CD4-positive, alpha-beta T cell (primary cell): ENCODE measurements at regions of chr19 and their contacts with region 1.

Region 1: DNA sequence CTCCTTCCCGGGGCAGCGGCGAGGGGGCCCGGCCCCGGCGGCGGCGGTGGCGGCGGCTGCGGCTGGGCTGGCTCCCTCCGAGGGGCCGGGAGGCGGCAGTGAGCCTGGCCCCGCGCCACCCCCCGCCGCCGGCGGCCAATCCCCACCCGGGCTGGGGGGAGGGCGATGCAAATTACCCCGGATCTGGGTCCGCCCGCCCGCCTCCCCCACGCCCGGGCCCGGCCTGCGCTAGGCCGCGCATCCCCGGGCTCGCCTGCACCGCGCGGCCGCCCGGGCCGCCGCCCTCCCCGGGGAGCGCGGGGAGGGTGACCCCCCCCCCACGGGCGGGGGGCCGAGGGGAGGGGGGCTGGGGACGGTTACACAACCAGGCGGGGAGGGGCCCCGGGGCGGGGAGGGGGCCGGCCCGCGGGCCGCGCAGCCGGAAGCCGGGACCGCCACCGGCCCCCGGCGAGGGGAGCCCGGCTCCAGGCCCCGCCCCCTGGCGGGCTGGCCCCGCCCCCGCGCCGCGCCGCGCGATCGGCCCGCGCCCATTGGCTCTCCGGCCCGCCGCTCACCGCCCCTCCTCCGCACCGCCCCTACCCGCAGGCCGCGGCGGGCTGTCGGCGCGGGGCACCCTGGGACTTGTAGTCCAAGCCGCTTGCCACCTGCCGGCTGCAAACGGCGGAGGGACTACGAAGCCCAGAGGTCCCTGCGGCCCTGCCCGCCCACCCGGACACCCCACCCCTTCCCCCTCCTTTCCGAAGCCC is 1.1 kb downstream of the ZBTB7A start:
- DNase-seq: peak; percentile 94 to 99 (median 97)
- ATAC-seq: peak; percentile 74
- H3K4me3 ChIP-seq: peak overlapping the region; percentile 89
- H3K4me3 Mint-ChIP-seq: peak overlapping the region; percentile 88
- H3K27ac ChIP-seq: peak overlapping the region in 1 of 2 donors; percentile 83
- H3K27ac Mint-ChIP-seq: peak overlapping the region; percentile 98
- H3K4me1 ChIP-seq: peaks cover 68% of the 10 kb centered on the region
- H3K4me1 Mint-ChIP-seq: peaks cover 33% of the 10 kb centered on the region
- H3K27me3 ChIP-seq: no peaks in the 10 kb centered on the region
- H3K27me3 Mint-ChIP-seq: no peaks in the 10 kb centered on the region
- CTCF ChIP-seq: no peak

Region 2: GRCh38 chr19:3907626-3908265 is 157.9 kb before region 1 on chr19:
- CTCF ChIA-PET with region 1: no interaction called
- POLR2A ChIA-PET with region 1: no interaction called
- intact Hi-C with region 1: no loop called
- DNase-seq: no peak
- ATAC-seq: no peak
- H3K4me3 ChIP-seq: no peak overlapping the region
- H3K4me3 Mint-ChIP-seq: no peak overlapping the region
- H3K27ac ChIP-seq: no peak overlapping the region
- H3K27ac Mint-ChIP-seq: no peak overlapping the region
- H3K4me1 ChIP-seq: no peaks in the 10 kb centered on the region
- H3K4me1 Mint-ChIP-seq: no peaks in the 10 kb centered on the region
- H3K27me3 ChIP-seq: no peaks in the 10 kb centered on the region
- H3K27me3 Mint-ChIP-seq: no peaks in the 10 kb centered on the region
- CTCF ChIP-seq: no peak

Region 3: DNA sequence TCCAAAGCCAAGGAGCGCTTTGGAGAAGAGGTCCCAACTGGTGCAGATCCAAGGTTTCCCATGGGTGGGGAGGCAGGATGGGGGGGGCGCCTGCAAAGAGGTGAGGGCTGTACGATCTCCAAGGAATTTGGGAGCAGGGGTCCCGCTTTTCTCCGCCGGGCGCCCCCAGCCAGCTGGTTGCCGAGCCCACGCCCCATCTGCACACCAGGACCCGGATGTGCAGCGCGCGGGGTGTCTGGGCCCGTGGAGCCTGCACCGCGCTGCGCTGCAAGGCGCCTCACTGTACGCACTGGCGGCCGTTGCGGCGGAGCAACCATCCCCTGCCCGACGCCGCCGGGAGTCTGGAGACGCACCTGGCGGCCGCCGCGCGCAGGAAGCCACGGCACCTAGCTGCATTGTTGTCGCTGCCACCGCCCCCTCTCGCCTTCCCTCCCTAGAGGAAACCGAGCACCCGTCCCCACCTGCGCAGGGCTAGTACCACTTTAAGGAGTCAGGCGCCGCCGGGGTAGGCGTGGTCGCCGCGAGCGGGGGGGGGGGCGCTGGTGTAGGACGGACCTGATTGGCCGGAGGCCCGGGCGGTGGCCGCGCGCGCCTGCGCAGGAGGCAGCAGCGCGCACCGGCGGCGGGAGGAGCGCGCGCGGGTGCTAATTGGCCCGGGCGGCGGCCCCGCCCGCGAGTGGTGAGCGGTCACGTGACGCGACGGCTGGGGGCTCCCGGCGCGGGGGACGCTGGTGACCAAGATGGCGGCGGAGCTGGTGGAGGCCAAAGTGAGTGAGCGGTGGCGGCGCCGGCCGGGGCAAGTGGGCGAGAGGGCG is 58.4 kb before region 1 on chr19 and contains the start of gene PIAS4:
- CTCF ChIA-PET with region 1: no interaction called
- POLR2A ChIA-PET with region 1: interaction called, 10 read pairs
- intact Hi-C with region 1: loop called (anchors 1 to 5 kb)
- DNase-seq: peak; percentile 93 to 99 (median 96)
- ATAC-seq: peak; percentile 87
- H3K4me3 ChIP-seq: peak within 1 kb of the TSS; percentile 85
- H3K4me3 Mint-ChIP-seq: peak within 1 kb of the TSS; percentile 89
- H3K27ac ChIP-seq: peak within 1 kb of the TSS in 1 of 2 donors; percentile 60
- H3K27ac Mint-ChIP-seq: peak within 1 kb of the TSS; percentile 80
- H3K4me1 ChIP-seq: peaks cover 48% of the 10 kb centered on the region
- H3K4me1 Mint-ChIP-seq: peaks cover 15% of the 10 kb centered on the region
- H3K27me3 ChIP-seq: no peaks in the 10 kb centered on the region
- H3K27me3 Mint-ChIP-seq: no peaks in the 10 kb centered on the region
- CTCF ChIP-seq: peak; percentile 24
- total RNA-seq, gene PIAS4: 14.5 to 16.5 TPM

Region 4: DNA sequence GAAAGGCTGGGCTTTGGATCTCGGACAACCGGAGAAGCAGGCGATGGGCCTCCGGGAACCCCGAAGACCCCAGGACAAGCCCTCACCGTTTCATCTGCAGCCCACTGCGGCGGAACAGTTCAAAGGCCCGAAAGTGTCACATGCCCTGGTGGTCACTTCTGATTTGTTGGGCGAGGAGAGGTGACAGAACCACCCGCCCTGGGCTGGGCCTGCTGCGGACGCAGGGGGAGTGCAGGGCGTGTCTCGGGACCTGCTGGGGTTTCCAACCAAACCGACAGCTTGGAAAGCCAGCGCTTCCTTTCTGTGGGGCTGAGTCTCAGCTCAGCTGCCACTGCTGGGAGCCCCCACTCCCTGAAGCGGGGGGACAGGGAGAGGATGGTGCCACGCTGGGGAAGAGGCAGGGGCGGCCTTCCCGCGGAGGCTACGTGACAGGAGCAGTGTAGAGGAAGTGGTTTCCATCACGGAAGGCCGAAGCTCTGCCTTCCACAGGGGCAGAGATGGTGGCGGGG is 23.9 kb after region 1 on chr19:
- CTCF ChIA-PET with region 1: no interaction called
- POLR2A ChIA-PET with region 1: interaction called, 17 read pairs
- intact Hi-C with region 1: no loop called
- DNase-seq: peak in 9 of 14 experiments; percentile 25 to 81 (median 48)
- ATAC-seq: peak; percentile 47
- H3K4me3 ChIP-seq: peak overlapping the region; percentile 34
- H3K4me3 Mint-ChIP-seq: peak overlapping the region; percentile 80
- H3K27ac ChIP-seq: peak overlapping the region; percentile 52 to 77
- H3K27ac Mint-ChIP-seq: peak overlapping the region; percentile 95
- H3K4me1 ChIP-seq: peaks cover 57% of the 10 kb centered on the region
- H3K4me1 Mint-ChIP-seq: peaks cover 40% of the 10 kb centered on the region
- H3K27me3 ChIP-seq: no peaks in the 10 kb centered on the region
- H3K27me3 Mint-ChIP-seq: no peaks in the 10 kb centered on the region
- CTCF ChIP-seq: no peak

Region 5: DNA sequence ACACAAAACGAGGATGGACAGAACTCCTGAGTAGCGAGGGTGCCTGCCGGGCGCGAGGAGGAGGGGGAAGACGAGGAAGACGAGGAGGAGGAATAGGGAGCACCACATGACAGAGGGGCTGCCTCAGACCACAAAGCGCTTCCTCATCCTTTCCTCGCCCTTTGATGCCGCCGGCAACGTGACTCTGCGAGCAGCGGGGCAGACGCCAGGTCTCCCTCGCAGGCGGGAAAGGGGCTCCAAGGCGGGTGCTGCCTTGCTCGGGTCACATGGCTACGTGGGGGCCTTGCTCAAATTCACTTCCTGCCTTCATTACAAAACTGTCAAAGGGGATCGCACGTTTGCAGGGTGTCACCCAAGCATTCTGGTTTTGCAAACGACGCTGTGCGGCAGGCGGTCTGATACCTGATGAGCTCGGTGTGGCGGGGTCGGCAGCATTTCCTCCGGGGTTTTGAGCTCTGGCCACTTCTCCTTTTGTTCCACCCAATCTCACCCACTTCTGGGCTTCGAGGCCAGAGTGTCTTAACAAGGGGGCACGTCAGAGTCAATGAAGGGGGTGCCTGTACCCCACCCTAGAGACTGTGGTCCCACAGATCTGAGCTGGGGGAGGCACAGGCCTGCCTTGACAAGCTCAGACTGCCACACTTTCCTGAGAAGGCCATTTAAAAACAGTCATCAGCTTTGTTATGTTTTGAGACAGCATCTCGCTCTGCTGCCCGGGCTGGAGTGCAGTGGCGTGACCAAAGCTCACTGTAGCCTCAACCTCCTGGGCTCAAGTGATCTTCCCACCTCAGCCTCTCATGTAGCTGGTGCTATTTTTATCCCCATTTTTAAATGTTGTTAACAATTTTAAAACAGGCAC is 43.4 kb after region 1 on chr19:
- CTCF ChIA-PET with region 1: no interaction called
- POLR2A ChIA-PET with region 1: interaction called, 70 read pairs
- intact Hi-C with region 1: loop called (anchors 1 to 2 kb)
- DNase-seq: peak; percentile 39 to 92 (median 76)
- ATAC-seq: peak; percentile 59
- H3K4me3 ChIP-seq: peak overlapping the region; percentile 16
- H3K4me3 Mint-ChIP-seq: peak overlapping the region; percentile 68
- H3K27ac ChIP-seq: peak overlapping the region; percentile 53 to 75
- H3K27ac Mint-ChIP-seq: peak overlapping the region; percentile 96
- H3K4me1 ChIP-seq: peaks cover 75% of the 10 kb centered on the region
- H3K4me1 Mint-ChIP-seq: peaks cover 46% of the 10 kb centered on the region
- H3K27me3 ChIP-seq: no peaks in the 10 kb centered on the region
- H3K27me3 Mint-ChIP-seq: no peaks in the 10 kb centered on the region
- CTCF ChIP-seq: no peak

Region 6: GRCh38 chr19:4123615-4124568 is 58.3 kb after region 1 on chr19 and contains the start of gene MAP2K2:
- CTCF ChIA-PET with region 1: no interaction called
- POLR2A ChIA-PET with region 1: interaction called, 3 read pairs
- intact Hi-C with region 1: loop called in 1 of 2 experiments (anchors 2 kb)
- DNase-seq: peak; percentile 92 to 99 (median 96)
- ATAC-seq: peak; percentile 97
- H3K4me3 ChIP-seq: peak within 1 kb of the TSS; percentile 59
- H3K4me3 Mint-ChIP-seq: peak within 1 kb of the TSS; percentile 93
- H3K27ac ChIP-seq: peak within 1 kb of the TSS; percentile 44 to 53
- H3K27ac Mint-ChIP-seq: peak within 1 kb of the TSS; percentile 89
- H3K4me1 ChIP-seq: peaks cover 32% of the 10 kb centered on the region
- H3K4me1 Mint-ChIP-seq: peaks cover 26% of the 10 kb centered on the region
- H3K27me3 ChIP-seq: no peaks in the 10 kb centered on the region
- H3K27me3 Mint-ChIP-seq: no peaks in the 10 kb centered on the region
- CTCF ChIP-seq: no peak
- total RNA-seq, gene MAP2K2: 72.7 to 77.6 TPM